ENCODE measurements at regions of chr20 and their contacts with region 1.

Region 1: GRCh38 chr20:48657475-48658470 is 170.0 kb downstream of the PREX1 start:
- DNase-seq: peak; percentile 78 to 92
- ATAC-seq: peak; percentile 83 to 91
- H3K4me3 ChIP-seq: no peak overlapping the region
- H3K27ac ChIP-seq: no peak overlapping the region
- H3K4me1 ChIP-seq: no peaks in the 10 kb centered on the region
- CTCF ChIP-seq: peak; percentile 94
- EP300 ChIP-seq: no peak
- POLR2A ChIP-seq: no peak
- RAD21 ChIP-seq: peak; percentile 96 to 99

Region 2: DNA sequence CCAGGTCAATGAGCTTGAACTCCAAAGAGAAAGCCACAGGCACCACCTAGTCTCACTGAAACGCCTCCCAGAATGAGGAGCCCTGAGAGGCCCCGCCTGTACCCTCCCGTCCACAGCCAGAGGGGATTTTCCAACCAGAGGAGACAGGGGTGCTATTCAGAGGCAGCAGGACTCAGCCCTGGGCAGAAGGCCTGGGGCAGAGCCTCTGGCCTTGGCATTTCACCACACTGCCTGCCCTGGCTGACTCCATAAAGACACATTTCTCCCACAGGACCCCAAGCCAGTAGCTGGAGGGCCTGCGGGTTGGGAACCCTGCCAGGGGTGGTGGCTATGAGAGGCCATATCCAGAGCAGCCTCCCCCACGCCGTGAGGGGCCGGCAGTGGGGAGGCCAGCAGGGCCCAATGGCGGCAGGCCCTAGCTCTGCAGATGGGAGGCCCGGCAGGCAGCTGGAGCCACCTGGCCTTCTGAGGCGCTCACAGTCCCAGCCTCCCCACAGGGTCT is 10.7 kb after region 1 on chr20:
- CTCF ChIA-PET with region 1: interaction called, 62 read pairs
- POLR2A ChIA-PET with region 1: no interaction called
- DNase-seq: no peak
- ATAC-seq: no peak
- H3K4me3 ChIP-seq: no peak overlapping the region
- H3K27ac ChIP-seq: no peak overlapping the region
- H3K4me1 ChIP-seq: no peaks in the 10 kb centered on the region
- CTCF ChIP-seq: no peak
- EP300 ChIP-seq: no peak
- POLR2A ChIP-seq: no peak
- RAD21 ChIP-seq: no peak

Region 3: GRCh38 chr20:48690683-48691287 is 33.0 kb after region 1 on chr20:
- CTCF ChIA-PET with region 1: interaction called, 15 read pairs
- POLR2A ChIA-PET with region 1: no interaction called
- DNase-seq: no peak
- ATAC-seq: no peak
- H3K4me3 ChIP-seq: no peak overlapping the region
- H3K27ac ChIP-seq: no peak overlapping the region
- H3K4me1 ChIP-seq: 0 out of 3 replicates have a peak, but pooled peaks cover 4% of the 10 kb centered on the region
- CTCF ChIP-seq: no peak
- EP300 ChIP-seq: no peak
- POLR2A ChIP-seq: no peak
- RAD21 ChIP-seq: no peak

Region 4: DNA sequence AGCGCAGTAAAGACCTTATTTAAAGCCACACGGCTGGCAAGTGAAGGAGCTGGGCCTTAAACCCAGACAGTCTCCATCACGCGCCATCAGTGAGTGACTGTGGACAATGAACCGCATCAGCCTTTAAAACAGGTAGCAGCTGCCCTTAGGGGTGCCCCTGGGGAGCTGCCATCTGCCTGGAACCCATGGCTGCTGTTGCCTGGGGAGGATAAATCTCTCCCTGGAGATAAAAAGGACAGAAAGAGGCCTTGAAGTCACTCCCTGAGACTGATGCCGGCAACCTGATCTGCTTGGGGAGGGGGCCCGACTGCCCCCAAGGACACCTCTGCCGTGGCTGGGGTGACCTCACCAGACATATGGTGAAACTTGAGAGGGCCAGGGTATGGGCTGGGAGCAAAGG is 96.5 kb after region 1 on chr20:
- CTCF ChIA-PET with region 1: interaction called, 10 read pairs
- POLR2A ChIA-PET with region 1: no interaction called
- DNase-seq: no peak
- ATAC-seq: no peak
- H3K4me3 ChIP-seq: no peak overlapping the region
- H3K27ac ChIP-seq: no peak overlapping the region
- H3K4me1 ChIP-seq: no peaks in the 10 kb centered on the region
- CTCF ChIP-seq: no peak
- EP300 ChIP-seq: no peak
- POLR2A ChIP-seq: no peak
- RAD21 ChIP-seq: no peak

Region 5: DNA sequence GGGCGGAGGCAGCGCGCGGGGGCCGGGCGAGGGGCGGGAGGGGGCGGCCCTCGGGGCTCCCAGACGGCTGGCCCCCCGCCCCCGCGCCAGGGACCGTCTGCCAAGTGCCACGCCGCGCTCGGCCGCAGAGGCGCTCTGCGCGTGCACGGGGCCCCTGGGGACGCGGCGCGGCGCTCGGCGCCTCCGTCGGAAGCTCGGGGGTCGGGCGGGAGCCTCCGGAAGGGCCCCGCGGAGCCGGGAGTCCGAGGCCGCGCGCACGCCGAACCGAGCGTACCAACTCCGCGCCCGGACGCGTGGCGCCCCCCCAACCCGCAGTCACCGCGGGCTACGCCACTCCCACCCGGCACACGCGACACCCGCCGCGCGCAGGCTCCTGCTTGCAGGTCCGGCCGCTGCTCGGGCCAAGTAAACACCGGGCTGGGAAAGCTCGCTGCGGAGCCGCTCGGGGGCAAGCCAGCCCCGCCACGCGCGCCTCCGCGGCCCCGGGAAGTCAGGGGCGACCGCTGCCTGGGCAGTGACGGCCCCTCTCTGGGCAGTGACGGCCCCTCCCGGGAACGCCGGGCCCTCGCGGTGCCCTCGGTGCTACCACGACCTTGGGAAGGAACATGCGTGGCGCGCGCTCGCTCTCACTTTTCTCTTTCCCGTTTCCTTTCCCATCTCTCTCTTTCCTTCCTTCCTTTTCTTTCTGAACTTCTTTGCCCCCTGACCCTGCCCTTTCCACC is 170.4 kb after region 1 on chr20:
- CTCF ChIA-PET with region 1: interaction called, 35 read pairs
- POLR2A ChIA-PET with region 1: no interaction called
- DNase-seq: peak; percentile 77 to 89
- ATAC-seq: peak; percentile 75 to 78
- H3K4me3 ChIP-seq: peak overlapping the region; percentile 84
- H3K27ac ChIP-seq: peak overlapping the region; percentile 92 to 98
- H3K4me1 ChIP-seq: peaks cover 37% of the 10 kb centered on the region
- CTCF ChIP-seq: no peak
- EP300 ChIP-seq: no peak; a peak in 1 of 5 replicates
- POLR2A ChIP-seq: peak; percentile 47; the same call in 1 of the 2 replicates
- RAD21 ChIP-seq: peak in 1 of 2 experiments; percentile 39; a peak in 2 of 5 replicates

Region 6: GRCh38 chr20:48889144-48890114 is 231.7 kb after region 1 on chr20:
- CTCF ChIA-PET with region 1: interaction called, 22 read pairs
- POLR2A ChIA-PET with region 1: no interaction called
- DNase-seq: no peak
- ATAC-seq: no peak
- H3K4me3 ChIP-seq: no peak overlapping the region
- H3K27ac ChIP-seq: no peak overlapping the region
- H3K4me1 ChIP-seq: no peaks in the 10 kb centered on the region
- CTCF ChIP-seq: no peak
- EP300 ChIP-seq: no peak
- POLR2A ChIP-seq: no peak
- RAD21 ChIP-seq: no peak

Region 7: DNA sequence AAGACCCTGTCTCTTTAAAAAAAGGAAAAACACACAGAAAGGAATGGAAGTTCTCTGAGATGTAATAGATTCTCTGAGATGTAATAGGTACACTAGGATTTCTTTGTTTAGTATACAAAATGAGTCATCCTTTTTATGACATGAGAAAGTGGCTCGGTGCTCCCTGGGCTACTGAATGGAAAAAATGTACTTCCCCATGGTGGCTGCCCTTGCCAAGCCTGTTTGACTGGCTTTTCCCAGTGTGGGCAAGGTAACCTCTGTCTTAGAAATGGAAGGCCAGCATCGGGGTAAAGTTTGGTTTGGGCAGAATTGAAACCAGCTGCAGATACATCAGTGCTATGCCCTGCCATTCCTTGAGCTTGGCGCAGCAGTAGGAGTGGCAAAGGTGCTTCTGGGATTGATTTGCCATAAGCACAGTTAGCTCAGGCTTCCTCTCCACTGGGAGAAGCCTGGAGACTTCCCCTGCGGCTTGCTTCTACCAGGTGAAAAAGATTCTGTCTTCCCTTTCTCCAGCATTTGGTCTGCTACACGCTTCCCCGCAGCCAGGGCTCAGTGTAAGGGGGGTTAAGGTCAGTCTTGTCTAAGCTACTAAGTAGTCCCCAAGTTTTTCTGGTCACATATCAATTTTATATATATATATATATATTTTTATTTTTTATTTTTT is 288.2 kb after region 1 on chr20:
- CTCF ChIA-PET with region 1: interaction called, 10 read pairs
- POLR2A ChIA-PET with region 1: no interaction called
- DNase-seq: peak in 1 of 2 experiments; percentile 33
- ATAC-seq: peak; percentile 55 to 64; a peak in 3 of 6 replicates
- H3K4me3 ChIP-seq: no peak overlapping the region
- H3K27ac ChIP-seq: no peak overlapping the region
- H3K4me1 ChIP-seq: peaks cover 9% of the 10 kb centered on the region
- CTCF ChIP-seq: no peak
- EP300 ChIP-seq: no peak
- POLR2A ChIP-seq: no peak
- RAD21 ChIP-seq: no peak